CD4-positive, alpha-beta memory T cell (primary cell): ENCODE measurements at regions of chr10 and their contacts with region 1.

Region 1: DNA sequence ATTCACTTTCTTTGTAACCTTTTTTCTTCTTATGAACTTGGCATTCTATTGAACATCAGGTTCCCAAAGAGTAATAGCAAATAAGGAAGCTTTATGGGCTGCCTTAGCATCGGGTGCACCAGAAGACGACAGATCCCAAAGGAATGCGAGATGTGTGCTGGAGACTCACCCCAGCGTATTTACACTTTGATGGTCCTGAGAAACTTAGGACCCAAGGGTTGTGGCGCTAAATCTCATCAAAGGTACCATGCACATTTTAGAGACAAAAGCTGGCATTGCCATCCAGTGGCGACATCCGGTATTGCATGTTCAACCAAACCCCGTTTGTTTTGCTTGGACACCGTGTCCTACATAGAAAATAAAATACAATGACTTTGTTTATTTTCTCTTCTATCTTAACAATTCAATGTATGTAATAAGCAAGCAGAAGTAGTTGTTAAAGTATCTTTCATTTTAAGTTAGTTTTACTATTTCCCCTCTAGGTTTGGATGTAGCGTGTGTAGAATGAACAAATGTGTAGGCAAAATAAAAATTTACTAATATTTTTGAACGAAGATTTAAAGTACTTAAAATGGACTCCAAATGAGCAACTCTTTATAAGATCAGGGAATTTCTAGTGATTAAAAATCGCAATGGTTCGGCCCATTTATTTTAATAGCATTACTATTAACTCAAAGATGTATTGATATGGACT is 1154.8 kb downstream of the GATA3 start:
- DNase-seq: peak; percentile 50 to 66 (median 60)
- H3K4me3 ChIP-seq: no peak overlapping the region
- H3K4me3 Mint-ChIP-seq: peak overlapping the region in 2 of 8 donors; percentile 25 to 58
- H3K27ac ChIP-seq: no peak overlapping the region
- H3K27ac Mint-ChIP-seq: no peak overlapping the region
- H3K4me1 ChIP-seq: peaks cover 3% of the 10 kb centered on the region
- H3K4me1 Mint-ChIP-seq: no peaks in the 10 kb centered on the region
- H3K27me3 ChIP-seq: no peaks in the 10 kb centered on the region
- H3K27me3 Mint-ChIP-seq: peaks cover 3 to 6% of the 10 kb centered on the region in 2 donors

Region 2: GRCh38 chr10:7756360-7756992 is 1452.8 kb before region 1 on chr10:
- CTCF ChIA-PET with region 1: interaction called, 3 read pairs
- POLR2A ChIA-PET with region 1: no interaction called
- intact Hi-C with region 1: loop called (anchors 5 kb)
- DNase-seq: peak in 3 of 5 donors; percentile 4 to 8 (median 5)
- H3K4me3 ChIP-seq: no peak overlapping the region
- H3K4me3 Mint-ChIP-seq: no peak overlapping the region
- H3K27ac ChIP-seq: no peak overlapping the region
- H3K27ac Mint-ChIP-seq: peak overlapping the region in 2 of 7 donors; percentile 19 to 23
- H3K4me1 ChIP-seq: no peaks in the 10 kb centered on the region
- H3K4me1 Mint-ChIP-seq: no peaks in the 10 kb centered on the region
- H3K27me3 ChIP-seq: no peaks in the 10 kb centered on the region
- H3K27me3 Mint-ChIP-seq: no peaks in the 10 kb centered on the region

Region 3: DNA sequence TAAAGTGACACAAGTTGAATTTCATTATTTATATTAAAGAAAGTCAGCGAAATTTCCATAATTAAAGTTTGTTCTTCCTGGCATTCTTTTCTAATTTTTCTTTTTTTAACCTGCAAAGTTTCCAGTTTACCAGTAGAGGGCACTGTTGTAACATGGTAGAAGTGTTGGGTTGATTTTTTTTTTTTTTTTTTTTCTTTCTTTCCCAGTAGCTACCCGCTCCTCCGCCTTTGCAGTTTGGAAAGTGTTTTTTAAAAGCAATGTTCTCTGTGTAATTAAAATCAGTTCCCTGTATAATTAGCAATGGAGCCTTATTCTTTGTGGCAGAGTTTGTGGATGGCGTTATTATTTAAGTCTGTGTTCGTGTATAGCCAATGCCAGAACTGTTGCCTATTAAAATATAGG is 1337.2 kb before region 1 on chr10:
- CTCF ChIA-PET with region 1: interaction called, 16 read pairs
- POLR2A ChIA-PET with region 1: no interaction called
- intact Hi-C with region 1: loop called (anchors 1 kb)
- DNase-seq: peak in 4 of 5 donors; percentile 37 to 44 (median 42)
- H3K4me3 ChIP-seq: no peak overlapping the region
- H3K4me3 Mint-ChIP-seq: peak overlapping the region in 7 of 8 donors; percentile 51 to 84 (median 77)
- H3K27ac ChIP-seq: no peak overlapping the region
- H3K27ac Mint-ChIP-seq: peak overlapping the region in 2 of 7 donors; percentile 35 to 84
- H3K4me1 ChIP-seq: no peaks in the 10 kb centered on the region
- H3K4me1 Mint-ChIP-seq: peaks cover 10 to 13% (median 12%) of the 10 kb centered on the region in 4 donors
- H3K27me3 ChIP-seq: no peaks in the 10 kb centered on the region
- H3K27me3 Mint-ChIP-seq: no peaks in the 10 kb centered on the region

Region 4: GRCh38 chr10:9010093-9010492 is 199.2 kb before region 1 on chr10:
- CTCF ChIA-PET with region 1: no interaction called
- POLR2A ChIA-PET with region 1: no interaction called
- intact Hi-C with region 1: loop called (anchors 10 kb)
- DNase-seq: peak; percentile 69 to 80 (median 73)
- H3K4me3 ChIP-seq: no peak overlapping the region
- H3K4me3 Mint-ChIP-seq: peak overlapping the region; percentile 51 to 81 (median 66)
- H3K27ac ChIP-seq: no peak overlapping the region
- H3K27ac Mint-ChIP-seq: peak overlapping the region; percentile 64 to 97 (median 89)
- H3K4me1 ChIP-seq: peaks cover 33% of the 10 kb centered on the region
- H3K4me1 Mint-ChIP-seq: peaks cover 30 to 54% (median 43%) of the 10 kb centered on the region in 4 donors
- H3K27me3 ChIP-seq: no peaks in the 10 kb centered on the region
- H3K27me3 Mint-ChIP-seq: no peaks in the 10 kb centered on the region

Region 5: DNA sequence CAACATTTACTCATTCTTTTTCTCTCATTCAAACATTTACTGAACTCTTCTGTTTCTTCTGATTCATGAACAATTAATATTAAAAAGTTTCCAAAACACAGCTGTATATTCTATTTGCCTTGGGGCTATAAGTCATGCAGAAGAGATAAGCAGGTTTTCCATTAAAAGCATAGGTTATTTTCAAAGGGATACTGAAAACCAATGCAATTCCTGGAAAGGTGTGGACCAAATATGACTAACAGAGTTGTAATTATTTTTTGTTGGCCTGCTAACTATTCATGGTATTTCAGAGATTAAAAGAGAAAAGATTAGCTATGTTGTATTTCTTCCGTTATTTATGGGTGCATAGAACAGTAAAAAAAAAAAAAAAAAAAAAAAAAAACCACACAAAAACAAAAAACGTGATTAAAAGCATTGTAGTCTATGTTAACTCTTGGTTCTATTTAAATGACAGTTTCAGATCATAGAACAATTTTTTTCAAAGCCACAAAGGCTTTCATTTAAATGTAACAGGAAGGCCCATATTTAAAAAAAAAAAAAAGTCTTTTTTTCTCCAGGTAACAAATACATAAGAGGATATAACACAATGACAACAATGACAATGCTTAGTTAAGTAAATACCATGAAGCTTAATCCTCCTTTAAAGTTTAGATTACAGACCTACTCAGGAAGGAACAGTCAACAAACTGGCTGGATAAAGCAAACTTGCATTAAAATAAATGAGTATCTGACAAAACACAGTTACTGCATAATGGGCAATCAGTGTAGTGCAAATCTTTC is 111.9 kb before region 1 on chr10:
- CTCF ChIA-PET with region 1: interaction called, 7 read pairs
- POLR2A ChIA-PET with region 1: interaction called, 5 read pairs
- intact Hi-C with region 1: loop called (anchors 10 kb)
- DNase-seq: peak in 4 of 5 donors; percentile 71 to 82 (median 77)
- H3K4me3 ChIP-seq: no peak overlapping the region
- H3K4me3 Mint-ChIP-seq: peak overlapping the region in 6 of 8 donors; percentile 12 to 67 (median 47)
- H3K27ac ChIP-seq: no peak overlapping the region
- H3K27ac Mint-ChIP-seq: peak overlapping the region; percentile 77 to 95 (median 88)
- H3K4me1 ChIP-seq: peaks cover 33% of the 10 kb centered on the region
- H3K4me1 Mint-ChIP-seq: peaks cover 17 to 30% (median 25%) of the 10 kb centered on the region in 4 donors
- H3K27me3 ChIP-seq: no peaks in the 10 kb centered on the region
- H3K27me3 Mint-ChIP-seq: peaks cover 0 to 2% of the 10 kb centered on the region in 2 donors

Region 6: GRCh38 chr10:9193120-9193519 is 16.1 kb before region 1 on chr10:
- CTCF ChIA-PET with region 1: interaction called, 13 read pairs
- POLR2A ChIA-PET with region 1: no interaction called
- intact Hi-C with region 1: no loop called
- DNase-seq: no peak
- H3K4me3 ChIP-seq: no peak overlapping the region
- H3K4me3 Mint-ChIP-seq: no peak overlapping the region
- H3K27ac ChIP-seq: no peak overlapping the region
- H3K27ac Mint-ChIP-seq: no peak overlapping the region
- H3K4me1 ChIP-seq: no peaks in the 10 kb centered on the region
- H3K4me1 Mint-ChIP-seq: no peaks in the 10 kb centered on the region
- H3K27me3 ChIP-seq: no peaks in the 10 kb centered on the region
- H3K27me3 Mint-ChIP-seq: peaks cover 9% of the 10 kb centered on the region in 2 donors

Region 7: DNA sequence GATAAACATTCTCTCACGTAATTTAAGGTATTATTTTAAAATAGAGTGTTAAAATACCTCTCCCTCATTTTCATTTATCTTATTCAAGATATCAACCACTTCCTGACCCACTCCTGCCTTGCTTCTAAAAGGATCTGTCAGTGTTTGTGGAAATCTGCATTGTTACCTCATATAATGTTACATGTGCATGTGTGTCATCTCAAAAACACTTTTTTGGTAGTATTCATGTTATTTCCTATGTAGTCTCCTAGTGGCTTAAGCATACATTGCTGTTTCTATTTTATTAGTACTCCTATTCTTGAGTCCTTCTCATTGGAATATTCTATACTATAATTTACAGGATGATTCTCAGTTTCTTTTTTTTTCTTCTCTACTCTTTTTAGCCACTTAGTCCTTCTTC is 447.7 kb after region 1 on chr10:
- CTCF ChIA-PET with region 1: no interaction called
- POLR2A ChIA-PET with region 1: no interaction called
- intact Hi-C with region 1: no loop called
- DNase-seq: no peak
- H3K4me3 ChIP-seq: no peak overlapping the region
- H3K4me3 Mint-ChIP-seq: no peak overlapping the region
- H3K27ac ChIP-seq: no peak overlapping the region
- H3K27ac Mint-ChIP-seq: no peak overlapping the region
- H3K4me1 ChIP-seq: no peaks in the 10 kb centered on the region
- H3K4me1 Mint-ChIP-seq: no peaks in the 10 kb centered on the region
- H3K27me3 ChIP-seq: no peaks in the 10 kb centered on the region
- H3K27me3 Mint-ChIP-seq: peaks cover 0 to 3% of the 10 kb centered on the region in 2 donors